ENCODE measurements at regions of chr2 and their contacts with region 1.

Region 1: DNA sequence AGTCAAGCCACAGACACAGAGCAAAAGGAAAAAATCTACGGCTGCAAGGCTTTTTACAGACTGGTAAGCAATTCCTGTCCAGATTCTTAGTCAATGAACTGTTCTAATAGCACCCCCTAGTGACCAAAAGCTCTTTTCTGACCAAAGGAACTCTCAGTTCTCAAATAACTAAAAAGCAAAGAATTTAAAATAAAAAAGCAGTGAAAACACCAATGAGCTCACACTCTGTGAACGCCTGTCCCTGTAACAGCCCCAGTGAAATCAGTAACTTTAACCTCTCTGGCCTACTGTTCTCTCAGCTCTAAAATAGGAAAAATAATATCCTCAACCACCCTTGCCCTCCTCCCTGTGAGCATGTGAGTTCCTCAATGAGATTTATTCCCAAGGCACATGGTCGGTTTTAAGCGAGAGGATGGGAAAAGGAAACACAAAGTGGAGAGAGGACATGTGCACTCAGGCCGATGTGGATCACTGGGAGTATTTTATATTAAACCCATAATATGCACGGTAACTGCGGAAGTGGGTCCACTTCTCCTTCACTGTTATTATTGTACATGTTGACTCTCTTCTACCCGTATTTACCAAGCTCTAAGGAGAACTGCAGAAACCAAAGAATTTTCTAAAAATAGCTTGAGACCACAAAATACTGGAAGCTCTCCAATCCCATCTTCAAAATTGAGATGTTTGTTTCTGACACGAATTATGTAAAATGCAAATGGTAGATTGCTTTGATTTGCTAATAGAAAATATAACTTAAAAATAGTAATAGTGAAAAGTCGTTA is 128.5 kb downstream of the STK39 start:
- DNase-seq: peak; percentile 21
- ATAC-seq: peak; percentile 66
- H3K4me3 ChIP-seq: no peak overlapping the region
- H3K27ac ChIP-seq: peak overlapping the region; percentile 13; the same call in 1 of the 2 replicates
- H3K4me1 ChIP-seq: no peaks in the 10 kb centered on the region
- H3K27me3 ChIP-seq: no peaks in the 10 kb centered on the region
- CTCF ChIP-seq: peak; percentile 35 to 72 (median 63); a peak in 5 of 6 replicates
- POLR2A ChIP-seq: no peak
- RAD21 ChIP-seq: peak; percentile 60

Region 2: DNA sequence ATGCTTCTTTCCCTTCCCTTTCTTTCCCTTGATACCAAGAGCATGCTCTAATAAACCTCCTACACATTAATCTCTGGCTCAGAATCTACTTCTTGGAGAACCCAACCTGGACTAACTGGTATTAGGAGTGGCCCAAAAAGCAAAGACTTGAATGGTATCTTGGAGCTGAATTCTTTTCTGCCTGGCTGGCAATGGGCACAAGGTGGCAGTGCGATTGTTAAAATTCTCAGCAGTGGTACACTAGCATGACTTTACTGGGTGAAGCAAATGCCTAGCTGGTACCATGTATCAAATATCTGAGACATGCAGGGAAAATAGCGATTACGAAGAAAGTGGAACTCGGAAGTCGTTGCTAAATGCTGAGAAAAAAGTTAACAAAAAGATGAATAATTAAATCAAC is 854.5 kb before region 1 on chr2:
- CTCF ChIA-PET with region 1: interaction called, 21 read pairs
- POLR2A ChIA-PET with region 1: no interaction called
- RAD21 ChIA-PET with region 1: no interaction called
- intact Hi-C with region 1: loop called (anchors 10 kb)
- DNase-seq: no peak
- ATAC-seq: peak; percentile 60; the same call in 1 of the 2 replicates
- H3K4me3 ChIP-seq: no peak overlapping the region
- H3K27ac ChIP-seq: no peak overlapping the region
- H3K4me1 ChIP-seq: no peaks in the 10 kb centered on the region
- H3K27me3 ChIP-seq: no peaks in the 10 kb centered on the region
- CTCF ChIP-seq: peak in 2 of 3 experiments; percentile 24 to 31; a peak in 2 of 6 replicates
- POLR2A ChIP-seq: no peak
- RAD21 ChIP-seq: peak; percentile 45; the same call in 1 of the 2 replicates

Region 3: GRCh38 chr2:167748536-167748935 is 370.4 kb before region 1 on chr2:
- CTCF ChIA-PET with region 1: no interaction called
- POLR2A ChIA-PET with region 1: no interaction called
- RAD21 ChIA-PET with region 1: no interaction called
- intact Hi-C with region 1: no loop called
- DNase-seq: no peak
- ATAC-seq: no peak
- H3K4me3 ChIP-seq: no peak overlapping the region
- H3K27ac ChIP-seq: no peak overlapping the region
- H3K4me1 ChIP-seq: no peaks in the 10 kb centered on the region
- H3K27me3 ChIP-seq: peaks cover 35% of the 10 kb centered on the region
- CTCF ChIP-seq: no peak
- POLR2A ChIP-seq: no peak
- RAD21 ChIP-seq: no peak

Region 4: GRCh38 chr2:167964650-167965413 is 154.1 kb before region 1 on chr2:
- CTCF ChIA-PET with region 1: interaction called, 3 read pairs
- POLR2A ChIA-PET with region 1: no interaction called
- RAD21 ChIA-PET with region 1: no interaction called
- intact Hi-C with region 1: loop called (anchors 1 kb)
- DNase-seq: no peak
- ATAC-seq: no peak
- H3K4me3 ChIP-seq: no peak overlapping the region
- H3K27ac ChIP-seq: no peak overlapping the region
- H3K4me1 ChIP-seq: no peaks in the 10 kb centered on the region
- H3K27me3 ChIP-seq: no peaks in the 10 kb centered on the region
- CTCF ChIP-seq: peak; percentile 16 to 42 (median 24); a peak in 3 of 6 replicates
- POLR2A ChIP-seq: no peak
- RAD21 ChIP-seq: peak; percentile 38

Region 5: DNA sequence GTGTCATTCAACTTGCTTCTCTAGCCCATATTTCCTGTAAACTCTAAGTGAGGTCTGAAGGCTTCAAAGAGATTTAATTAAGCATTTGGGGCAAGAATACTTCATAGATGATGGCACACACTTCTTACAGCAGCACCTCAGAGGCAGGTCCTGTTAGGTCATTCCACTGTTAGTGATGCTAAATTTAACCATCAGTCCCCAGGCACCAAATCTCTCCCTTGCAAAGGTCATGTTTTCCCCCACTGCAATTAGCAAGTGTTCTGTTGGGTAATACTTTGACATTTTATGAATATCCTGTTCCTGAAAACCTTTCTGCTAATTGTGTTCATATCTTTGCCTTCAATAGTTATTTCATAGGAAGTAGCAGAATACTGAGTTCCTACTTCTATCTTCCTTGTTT is 11.4 kb after region 1 on chr2:
- CTCF ChIA-PET with region 1: interaction called, 17 read pairs
- POLR2A ChIA-PET with region 1: no interaction called
- RAD21 ChIA-PET with region 1: no interaction called
- intact Hi-C with region 1: no loop called
- DNase-seq: no peak
- ATAC-seq: no peak
- H3K4me3 ChIP-seq: no peak overlapping the region
- H3K27ac ChIP-seq: no peak overlapping the region
- H3K4me1 ChIP-seq: 0 out of 4 replicates have a peak, but pooled peaks cover 0 to under 1% of the 10 kb centered on the region in 2 experiments
- H3K27me3 ChIP-seq: no peaks in the 10 kb centered on the region
- CTCF ChIP-seq: no peak
- POLR2A ChIP-seq: no peak
- RAD21 ChIP-seq: no peak

Region 6: DNA sequence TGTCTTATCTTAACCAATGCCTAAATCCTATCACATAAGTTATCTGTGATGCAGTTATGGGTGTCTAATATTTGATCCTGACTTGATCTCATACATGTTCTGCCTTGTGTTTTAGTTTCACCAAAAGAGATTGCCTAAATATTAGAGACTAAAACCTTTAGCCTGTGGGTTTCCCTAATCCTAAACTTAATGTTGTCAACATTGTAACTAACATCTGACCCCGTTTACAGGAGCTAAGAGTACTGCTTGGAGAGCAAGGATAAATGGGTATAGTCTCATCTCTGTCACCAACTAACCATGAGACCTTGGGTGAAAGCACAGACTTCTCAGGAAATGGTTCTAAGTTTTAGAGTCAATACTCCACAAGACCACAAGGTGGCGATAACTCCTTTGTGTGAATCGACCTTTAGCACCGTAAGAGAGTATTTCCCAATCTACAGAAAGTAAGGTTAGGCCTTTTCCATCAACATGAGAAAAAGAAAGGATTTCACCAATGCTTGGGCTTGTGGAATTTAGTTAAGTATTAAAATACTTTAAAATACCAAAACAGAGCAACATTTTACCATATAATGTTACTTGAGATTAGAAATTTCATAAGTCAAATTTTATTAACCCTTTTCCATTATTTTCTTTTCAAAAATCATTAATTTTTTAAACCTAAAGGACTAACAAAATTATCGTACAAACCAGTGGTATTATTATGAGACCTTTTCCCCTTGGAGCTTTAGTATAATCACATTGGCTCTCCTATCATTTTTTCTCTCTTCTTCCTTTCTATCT is 842.7 kb after region 1 on chr2:
- CTCF ChIA-PET with region 1: no interaction called
- POLR2A ChIA-PET with region 1: no interaction called
- RAD21 ChIA-PET with region 1: no interaction called
- intact Hi-C with region 1: no loop called
- DNase-seq: peak; percentile 79
- ATAC-seq: peak; percentile 98
- H3K4me3 ChIP-seq: no peak overlapping the region
- H3K27ac ChIP-seq: no peak overlapping the region
- H3K4me1 ChIP-seq: 0 out of 4 replicates have a peak, but pooled peaks cover 0 to 2% of the 10 kb centered on the region in 2 experiments
- H3K27me3 ChIP-seq: no peaks in the 10 kb centered on the region
- CTCF ChIP-seq: peak; percentile 69 to 89 (median 81)
- POLR2A ChIP-seq: no peak
- RAD21 ChIP-seq: peak; percentile 86

Measured in HCT116 (cell line).